Esophagus muscularis mucosa (tissue), 4 donors: ENCODE measurements at regions of chr17 and their contacts with region 1.

Region 1: GRCh38 chr17:73532421-73532901 is 111.8 kb downstream of the SDK2 start:
- DNase-seq: no peak
- H3K4me3 ChIP-seq: no peak overlapping the region
- H3K27ac ChIP-seq: no peak overlapping the region
- H3K4me1 ChIP-seq: peaks cover 0 to 8% (median 0%) of the 10 kb centered on the region in 4 donors
- H3K27me3 ChIP-seq: no peaks in the 10 kb centered on the region
- CTCF ChIP-seq: no peak
- EP300 ChIP-seq: no peak
- POLR2A ChIP-seq: no peak

Region 2: GRCh38 chr17:73446617-73447016 is 85.8 kb before region 1 on chr17:
- intact Hi-C with region 1: no loop called
- DNase-seq: no peak
- H3K4me3 ChIP-seq: no peak overlapping the region
- H3K27ac ChIP-seq: no peak overlapping the region
- H3K4me1 ChIP-seq: no peaks in the 10 kb centered on the region
- H3K27me3 ChIP-seq: no peaks in the 10 kb centered on the region
- CTCF ChIP-seq: no peak
- EP300 ChIP-seq: no peak
- POLR2A ChIP-seq: no peak

Region 3: DNA sequence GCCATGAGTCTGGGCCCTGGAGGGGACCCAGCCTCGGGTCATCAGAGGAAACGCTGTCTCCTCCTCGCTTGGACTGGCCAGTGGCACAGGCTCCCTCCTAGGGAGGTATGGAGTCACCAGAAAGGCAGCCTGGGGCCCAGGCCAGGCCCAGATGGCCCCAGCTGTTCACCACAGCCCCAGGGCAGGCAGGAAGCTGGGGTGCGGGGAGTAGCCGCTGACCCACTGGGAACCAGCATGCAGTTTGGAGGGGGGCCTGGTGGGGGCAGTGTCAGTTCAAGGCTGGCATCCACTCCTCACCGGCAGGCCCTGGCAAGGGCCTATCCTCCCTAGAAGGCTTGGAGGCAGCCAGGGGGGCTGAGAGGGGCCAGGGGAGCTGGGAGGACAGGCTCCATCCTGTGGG is 63.0 kb after region 1 on chr17:
- intact Hi-C with region 1: loop called (anchors 10 kb)
- DNase-seq: no peak
- H3K4me3 ChIP-seq: no peak overlapping the region
- H3K27ac ChIP-seq: no peak overlapping the region
- H3K4me1 ChIP-seq: peaks cover 0 to 12% (median 4%) of the 10 kb centered on the region in 4 donors
- H3K27me3 ChIP-seq: peaks cover 0 to 2% (median 0%) of the 10 kb centered on the region in 4 donors
- CTCF ChIP-seq: peak in 1 of 3 experiments; percentile 27
- EP300 ChIP-seq: no peak
- POLR2A ChIP-seq: no peak